Activated naive CD4-positive, alpha-beta T cell treated with anti-CD3 and anti-CD28 coated beads for 36 hours (primary cell): ENCODE measurements at regions of chr4 and their contacts with region 1.

Region 1: DNA sequence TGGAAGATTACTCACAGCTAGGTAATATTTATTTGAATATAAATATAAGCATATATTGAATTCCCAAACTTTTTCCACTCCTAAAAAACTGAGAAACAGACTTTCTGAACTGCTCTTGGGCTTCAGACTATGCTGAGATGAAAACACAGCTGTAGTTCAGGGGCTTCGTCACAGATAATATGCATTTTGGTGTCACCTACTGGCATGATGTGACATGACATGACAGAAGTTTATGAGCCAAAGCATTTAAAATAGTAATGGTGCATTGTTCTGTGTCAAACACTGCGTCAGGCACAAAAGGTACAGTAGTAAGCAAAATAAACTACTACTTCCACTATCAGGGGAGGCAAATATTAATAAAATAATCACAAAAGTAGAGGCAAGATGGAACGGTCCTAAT is 171.3 kb downstream of the BTC start:
- DNase-seq: peak; percentile 47
- H3K4me3 Mint-ChIP-seq: no peak overlapping the region
- H3K27ac Mint-ChIP-seq: no peak overlapping the region
- H3K4me1 Mint-ChIP-seq: peaks cover 29% of the 10 kb centered on the region
- H3K27me3 Mint-ChIP-seq: no peaks in the 10 kb centered on the region

Region 2: GRCh38 chr4:74228691-74229640 is 394.1 kb before region 1 on chr4:
- CTCF ChIA-PET with region 1: interaction called, 5 read pairs
- intact Hi-C with region 1: loop called (anchors 5 kb)
- DNase-seq: peak; percentile 88
- H3K4me3 Mint-ChIP-seq: no peak overlapping the region
- H3K27ac Mint-ChIP-seq: no peak overlapping the region
- H3K4me1 Mint-ChIP-seq: peaks cover 3% of the 10 kb centered on the region
- H3K27me3 Mint-ChIP-seq: no peaks in the 10 kb centered on the region

Region 3: DNA sequence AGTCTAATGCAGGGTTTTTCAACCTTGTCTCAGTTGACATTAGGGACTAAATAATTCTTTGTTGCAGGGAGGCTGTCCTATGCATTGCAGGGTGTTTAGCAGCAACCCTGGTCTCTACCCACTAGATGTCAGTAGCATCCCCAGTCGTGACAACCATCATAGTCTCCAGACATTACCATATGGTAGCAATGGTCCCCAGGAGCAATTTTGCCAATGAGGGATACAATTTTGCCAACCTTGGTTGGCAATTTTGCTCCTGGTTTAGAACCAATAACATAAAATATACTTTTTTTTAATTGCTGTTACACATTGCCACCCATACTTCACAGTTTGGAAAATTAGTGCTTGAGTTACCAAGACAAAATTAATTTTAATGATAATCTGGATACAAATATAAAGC is 252.1 kb before region 1 on chr4:
- CTCF ChIA-PET with region 1: interaction called, 5 read pairs
- intact Hi-C with region 1: loop called (anchors 1 kb)
- DNase-seq: peak; percentile 53
- H3K4me3 Mint-ChIP-seq: no peak overlapping the region
- H3K27ac Mint-ChIP-seq: no peak overlapping the region
- H3K4me1 Mint-ChIP-seq: no peaks in the 10 kb centered on the region
- H3K27me3 Mint-ChIP-seq: peaks cover 25% of the 10 kb centered on the region

Region 4: DNA sequence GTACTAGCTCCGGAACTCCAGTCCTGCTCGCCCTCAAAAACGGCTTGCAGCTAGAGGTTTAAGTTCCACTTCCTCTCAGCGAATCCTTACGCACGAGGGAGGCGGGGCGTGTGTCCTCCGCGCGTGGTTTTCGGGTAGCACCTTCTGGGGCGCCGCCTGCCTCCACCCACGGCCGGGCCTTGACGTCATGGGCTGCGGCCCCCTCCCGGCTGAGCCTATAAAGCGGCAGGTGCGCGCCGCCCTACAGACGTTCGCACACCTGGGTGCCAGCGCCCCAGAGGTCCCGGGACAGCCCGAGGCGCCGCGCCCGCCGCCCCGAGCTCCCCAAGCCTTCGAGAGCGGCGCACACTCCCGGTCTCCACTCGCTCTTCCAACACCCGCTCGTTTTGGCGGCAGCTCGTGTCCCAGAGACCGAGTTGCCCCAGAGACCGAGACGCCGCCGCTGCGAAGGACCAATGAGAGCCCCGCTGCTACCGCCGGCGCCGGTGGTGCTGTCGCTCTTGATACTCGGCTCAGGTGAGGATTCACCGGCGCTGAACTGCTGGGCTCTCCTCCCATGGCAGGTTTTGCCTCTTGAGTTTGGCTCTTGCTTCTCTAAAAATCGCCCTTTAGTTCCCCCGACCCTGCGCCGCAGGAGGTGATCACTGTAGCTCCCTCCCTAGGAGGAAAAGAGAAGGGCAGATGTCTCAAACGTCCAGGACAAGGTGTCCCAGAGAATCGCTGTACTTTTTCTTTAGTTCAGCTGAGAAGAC is 178.0 kb before region 1 on chr4 and contains the start of gene AREG:
- CTCF ChIA-PET with region 1: interaction called, 5 read pairs
- intact Hi-C with region 1: loop called (anchors 2 kb)
- DNase-seq: peak; percentile 91
- H3K4me3 Mint-ChIP-seq: peak within 1 kb of the TSS; percentile 87
- H3K27ac Mint-ChIP-seq: peak within 1 kb of the TSS; percentile 75
- H3K4me1 Mint-ChIP-seq: peaks cover 4% of the 10 kb centered on the region
- H3K27me3 Mint-ChIP-seq: no peaks in the 10 kb centered on the region
- total RNA-seq, gene AREG: 1.5 to 2.1 TPM

Region 5: DNA sequence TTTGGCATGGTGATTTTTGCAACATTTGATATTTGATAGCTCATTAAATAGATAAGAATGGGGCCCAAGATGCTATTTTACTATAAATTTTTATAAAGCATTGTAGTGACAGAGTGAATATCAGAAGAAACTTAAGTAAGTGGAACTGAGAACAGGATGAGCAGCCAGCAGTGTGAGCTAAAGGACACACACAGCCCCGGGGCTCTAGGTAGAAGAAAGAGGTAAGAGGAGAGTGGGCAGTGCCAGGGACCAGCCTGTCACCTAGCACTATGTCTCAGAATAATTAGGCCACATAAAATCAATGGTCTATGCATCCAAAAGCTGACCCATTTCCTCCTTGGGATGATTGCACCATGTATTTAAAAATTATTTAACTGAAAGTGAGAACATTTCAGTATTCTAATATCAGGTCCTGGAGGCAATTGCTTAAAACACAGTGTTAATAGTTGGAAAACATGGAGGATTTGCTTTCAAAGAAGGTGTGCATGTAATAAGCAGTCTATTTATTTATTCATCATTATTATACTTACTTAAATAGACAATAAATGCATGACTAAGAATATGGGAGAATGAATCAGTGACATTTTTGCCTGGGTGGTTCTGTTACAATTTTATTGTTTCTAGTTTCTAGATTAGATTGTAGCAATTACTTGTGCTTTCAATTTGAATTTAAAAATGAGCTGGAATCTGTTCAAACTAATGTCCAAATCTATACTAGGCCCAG is 32.7 kb before region 1 on chr4:
- CTCF ChIA-PET with region 1: no interaction called
- intact Hi-C with region 1: no loop called
- DNase-seq: no peak
- H3K4me3 Mint-ChIP-seq: no peak overlapping the region
- H3K27ac Mint-ChIP-seq: no peak overlapping the region
- H3K4me1 Mint-ChIP-seq: no peaks in the 10 kb centered on the region
- H3K27me3 Mint-ChIP-seq: no peaks in the 10 kb centered on the region

Region 6: DNA sequence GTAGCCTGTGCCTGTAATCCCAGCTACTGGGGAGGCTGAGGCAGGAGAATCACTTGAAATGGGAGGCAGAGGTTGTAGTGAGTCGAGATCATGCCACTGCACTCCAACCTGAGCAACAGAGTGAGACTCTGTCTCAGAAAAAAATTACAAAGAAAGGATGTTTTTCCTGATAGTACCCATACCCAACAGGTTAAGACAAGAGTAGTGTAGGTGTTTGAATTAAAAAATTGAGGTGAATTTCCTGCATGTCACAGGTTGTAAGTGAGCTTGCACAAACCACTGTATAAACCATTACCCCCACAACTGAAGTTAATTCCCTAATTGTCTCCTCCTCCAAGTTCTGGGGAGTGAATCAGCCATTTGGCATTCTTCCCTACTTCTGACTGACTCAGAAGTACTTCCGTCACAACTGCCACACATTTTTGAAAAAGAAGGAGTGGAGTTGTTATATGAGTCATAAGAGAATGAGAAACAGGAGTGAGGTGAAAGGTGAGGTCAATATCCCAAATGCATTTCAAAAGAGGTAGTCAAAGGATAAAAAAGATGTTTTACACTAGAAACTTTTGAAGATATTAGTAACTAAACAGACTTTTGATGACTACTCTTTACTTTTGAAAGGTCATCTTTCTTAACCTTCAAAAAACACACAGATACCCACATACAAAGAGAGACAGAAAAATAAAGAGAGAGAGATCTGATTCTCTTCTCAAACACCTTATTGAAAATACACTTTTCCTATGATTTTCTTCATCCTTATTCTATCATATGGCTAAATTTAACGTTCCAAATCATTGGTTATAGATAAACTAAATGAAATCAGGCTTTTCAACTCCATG is 36.8 kb after region 1 on chr4:
- CTCF ChIA-PET with region 1: no interaction called
- intact Hi-C with region 1: loop called (anchors 2 kb)
- DNase-seq: no peak
- H3K4me3 Mint-ChIP-seq: no peak overlapping the region
- H3K27ac Mint-ChIP-seq: no peak overlapping the region
- H3K4me1 Mint-ChIP-seq: peaks cover 12% of the 10 kb centered on the region
- H3K27me3 Mint-ChIP-seq: peaks cover 3% of the 10 kb centered on the region

Region 7: GRCh38 chr4:75004755-75005668 is 382.0 kb after region 1 on chr4:
- CTCF ChIA-PET with region 1: no interaction called
- intact Hi-C with region 1: no loop called
- DNase-seq: no peak
- H3K4me3 Mint-ChIP-seq: no peak overlapping the region
- H3K27ac Mint-ChIP-seq: no peak overlapping the region
- H3K4me1 Mint-ChIP-seq: no peaks in the 10 kb centered on the region
- H3K27me3 Mint-ChIP-seq: no peaks in the 10 kb centered on the region